ENCODE measurements at regions of chr11 and their contacts with region 1.

Region 1: GRCh38 chr11:128757235-128757711 is 63.4 kb downstream of the FLI1 start:
- DNase-seq: peak; percentile 27 to 74 (median 61)
- ATAC-seq: peak; percentile 96
- H3K4me3 ChIP-seq: no peak overlapping the region
- H3K4me3 Mint-ChIP-seq: peak overlapping the region in 8 of 10 donors; percentile 9 to 62 (median 40)
- H3K27ac ChIP-seq: no peak overlapping the region
- H3K27ac Mint-ChIP-seq: peak overlapping the region; percentile 43 to 92 (median 84)
- H3K4me1 ChIP-seq: peaks cover 36 to 49% of the 10 kb centered on the region in 2 donors
- H3K4me1 Mint-ChIP-seq: peaks cover 70 to 96% (median 89%) of the 10 kb centered on the region in 7 donors
- H3K27me3 ChIP-seq: no peaks in the 10 kb centered on the region
- H3K27me3 Mint-ChIP-seq: no peaks in the 10 kb centered on the region

Region 2: DNA sequence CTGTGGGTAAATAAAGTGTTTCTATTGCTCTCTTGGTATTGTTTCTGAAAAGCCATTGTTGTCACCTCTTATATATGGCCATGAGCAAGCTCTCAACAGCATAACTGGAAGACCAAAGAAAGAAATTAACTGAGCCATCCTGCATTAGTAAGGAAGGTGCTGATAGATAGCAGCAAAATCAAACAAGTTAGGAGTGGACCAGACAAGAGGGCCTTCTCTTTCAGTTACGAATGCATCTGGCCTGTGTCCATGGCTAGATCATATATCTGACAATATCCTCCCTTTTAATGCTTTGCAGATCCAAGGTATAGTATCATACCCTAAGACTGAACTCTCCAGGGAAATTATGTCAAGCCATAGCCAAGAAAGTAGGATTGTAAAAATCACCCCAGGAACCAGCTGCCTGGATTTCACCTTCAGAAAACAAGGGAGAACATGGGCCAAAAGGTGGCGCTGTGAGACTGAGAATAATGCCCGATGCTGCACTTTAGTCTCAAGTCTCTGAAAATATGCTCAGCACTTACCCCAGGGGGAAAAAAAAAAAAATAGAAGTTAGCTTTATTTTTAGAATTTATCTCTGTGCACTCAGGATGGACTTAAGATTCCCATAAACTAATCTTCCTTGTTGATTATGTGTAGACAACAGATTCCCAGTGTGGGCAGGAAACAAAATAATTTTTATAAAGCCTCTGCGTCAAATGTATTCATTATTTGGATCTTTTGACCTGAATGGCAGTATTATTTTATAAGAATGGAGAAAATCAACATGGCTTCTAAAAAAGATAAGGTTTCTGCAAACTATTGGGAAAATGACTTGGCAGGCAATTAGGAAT is 585.0 kb before region 1 on chr11:
- CTCF ChIA-PET with region 1: interaction called, 3 read pairs
- POLR2A ChIA-PET with region 1: no interaction called
- intact Hi-C with region 1: loop called (anchors 1 to 5 kb)
- DNase-seq: peak; percentile 59 to 82 (median 75)
- ATAC-seq: peak; percentile 85
- H3K4me3 ChIP-seq: no peak overlapping the region
- H3K4me3 Mint-ChIP-seq: no peak overlapping the region
- H3K27ac ChIP-seq: no peak overlapping the region
- H3K27ac Mint-ChIP-seq: peak overlapping the region in 2 of 9 donors; percentile 27 to 70
- H3K4me1 ChIP-seq: no peaks in the 10 kb centered on the region
- H3K4me1 Mint-ChIP-seq: peaks cover 0 to 9% (median 4%) of the 10 kb centered on the region in 7 donors
- H3K27me3 ChIP-seq: no peaks in the 10 kb centered on the region
- H3K27me3 Mint-ChIP-seq: peaks cover 0 to 15% (median 0%) of the 10 kb centered on the region in 5 donors

Region 3: GRCh38 chr11:128318856-128319474 is 438.3 kb before region 1 on chr11:
- CTCF ChIA-PET with region 1: no interaction called
- POLR2A ChIA-PET with region 1: no interaction called
- intact Hi-C with region 1: no loop called
- DNase-seq: peak in 7 of 9 donors; percentile 56 to 89 (median 70)
- ATAC-seq: peak; percentile 93
- H3K4me3 ChIP-seq: no peak overlapping the region
- H3K4me3 Mint-ChIP-seq: peak overlapping the region; percentile 26 to 68 (median 51)
- H3K27ac ChIP-seq: peak overlapping the region; percentile 76
- H3K27ac Mint-ChIP-seq: peak overlapping the region; percentile 77 to 96 (median 93)
- H3K4me1 ChIP-seq: peaks cover 48 to 49% of the 10 kb centered on the region in 2 donors
- H3K4me1 Mint-ChIP-seq: peaks cover 50 to 92% (median 86%) of the 10 kb centered on the region in 7 donors
- H3K27me3 ChIP-seq: no peaks in the 10 kb centered on the region
- H3K27me3 Mint-ChIP-seq: no peaks in the 10 kb centered on the region

Region 4: DNA sequence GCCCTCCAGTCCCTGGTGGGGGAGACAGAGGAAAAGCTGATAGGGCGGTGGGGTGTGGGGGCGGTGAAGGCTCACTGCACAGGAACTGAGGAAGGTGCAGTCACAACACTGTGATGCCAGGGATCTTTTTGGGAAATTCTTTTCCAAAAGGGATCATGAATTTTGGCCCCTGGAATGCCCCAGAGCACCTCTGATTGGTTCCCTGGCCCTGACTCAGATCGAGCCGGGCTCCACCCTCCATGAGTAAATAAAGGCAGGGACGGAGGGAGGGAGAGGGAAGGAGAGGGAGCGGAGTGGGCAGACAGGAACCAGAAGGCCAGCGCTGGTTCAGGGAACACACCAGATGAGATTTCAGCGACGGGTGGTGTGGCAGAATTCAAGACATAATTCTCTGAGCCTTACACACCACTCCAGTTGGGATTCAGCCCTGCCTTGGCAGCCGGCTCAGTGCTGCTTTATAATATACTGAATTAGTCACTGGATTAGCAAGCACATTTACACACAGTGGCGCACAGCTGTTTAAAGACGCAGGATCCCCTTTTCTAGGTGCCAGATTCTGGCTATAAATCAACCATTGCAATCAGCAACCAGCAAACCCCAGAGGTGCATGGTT is 250.2 kb before region 1 on chr11:
- CTCF ChIA-PET with region 1: no interaction called
- POLR2A ChIA-PET with region 1: interaction called, 3 read pairs
- intact Hi-C with region 1: loop called in 1 of 2 experiments (anchors 5 kb)
- DNase-seq: peak in 1 of 9 donors; percentile 60
- ATAC-seq: no peak
- H3K4me3 ChIP-seq: peak overlapping the region; percentile 96
- H3K4me3 Mint-ChIP-seq: peak overlapping the region; percentile 85 to 100 (median 98)
- H3K27ac ChIP-seq: peak overlapping the region; percentile 97
- H3K27ac Mint-ChIP-seq: peak overlapping the region; percentile 87 to 99 (median 97)
- H3K4me1 ChIP-seq: peaks cover 89 to 91% of the 10 kb centered on the region in 2 donors
- H3K4me1 Mint-ChIP-seq: peaks cover 70 to 98% (median 92%) of the 10 kb centered on the region in 7 donors
- H3K27me3 ChIP-seq: no peaks in the 10 kb centered on the region
- H3K27me3 Mint-ChIP-seq: no peaks in the 10 kb centered on the region

Region 5: DNA sequence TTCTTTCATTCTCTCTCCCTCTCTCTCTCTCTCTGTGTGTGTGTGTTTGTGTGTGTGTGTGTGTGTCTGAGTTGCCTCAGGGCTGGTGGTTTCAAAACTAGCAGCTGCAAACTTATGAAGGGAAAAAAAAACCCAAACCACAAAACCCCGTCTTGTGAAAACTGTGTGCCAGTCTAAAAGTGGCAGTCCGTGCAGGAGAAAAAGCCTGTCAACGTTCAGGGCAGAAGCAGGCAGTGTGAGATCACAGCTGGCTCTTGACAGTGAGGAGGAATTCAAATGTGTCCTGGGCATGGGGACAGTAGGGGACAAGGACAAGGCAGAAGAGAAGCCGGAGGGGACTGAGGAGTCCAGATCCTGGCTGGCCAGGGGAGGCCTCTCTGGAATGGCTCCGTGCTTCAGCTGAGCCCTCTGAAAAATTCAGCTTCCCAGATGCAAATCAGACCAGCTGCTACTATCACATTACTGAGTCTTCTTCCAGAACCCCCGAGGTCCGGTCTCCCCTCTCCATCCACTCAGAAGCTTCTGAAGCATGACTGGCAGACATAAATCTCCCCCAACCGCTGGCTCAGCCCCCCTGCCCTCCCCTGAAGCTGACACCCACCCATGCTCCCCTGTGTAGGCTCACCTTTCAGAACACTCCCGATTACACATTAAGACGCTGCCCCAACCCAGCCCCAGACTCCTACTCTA is 31.5 kb before region 1 on chr11:
- CTCF ChIA-PET with region 1: interaction called, 12 read pairs
- POLR2A ChIA-PET with region 1: interaction called, 7 read pairs
- intact Hi-C with region 1: loop called (anchors 1 to 2 kb)
- DNase-seq: peak; percentile 32 to 90 (median 86)
- ATAC-seq: peak; percentile 76
- H3K4me3 ChIP-seq: peak overlapping the region; percentile 62
- H3K4me3 Mint-ChIP-seq: peak overlapping the region; percentile 70 to 96 (median 86)
- H3K27ac ChIP-seq: peak overlapping the region; percentile 65
- H3K27ac Mint-ChIP-seq: peak overlapping the region; percentile 71 to 98 (median 92)
- H3K4me1 ChIP-seq: peaks cover 96 to 99% of the 10 kb centered on the region in 2 donors
- H3K4me1 Mint-ChIP-seq: peaks cover 90 to 100% (median 97%) of the 10 kb centered on the region in 7 donors
- H3K27me3 ChIP-seq: no peaks in the 10 kb centered on the region
- H3K27me3 Mint-ChIP-seq: no peaks in the 10 kb centered on the region

Region 6: DNA sequence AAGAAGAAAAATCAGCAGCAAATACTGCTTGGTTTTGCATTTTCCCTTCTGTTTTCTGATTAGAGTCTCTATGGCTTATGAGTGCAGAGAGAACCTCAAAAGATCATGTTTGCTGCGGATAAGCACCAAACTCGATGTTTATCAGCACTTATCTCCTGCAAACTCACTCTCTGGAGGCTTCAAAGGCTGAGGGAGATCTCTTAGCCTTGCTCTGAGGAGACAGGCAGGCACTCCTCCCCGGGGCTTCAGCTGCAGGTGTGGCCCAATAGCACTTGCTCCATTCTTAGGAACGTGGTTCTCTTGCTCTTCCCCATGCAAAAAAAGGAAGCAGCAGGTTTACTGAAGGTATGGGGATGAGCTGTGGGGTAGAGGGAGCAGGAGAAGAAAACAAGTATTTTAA is 18.3 kb before region 1 on chr11:
- CTCF ChIA-PET with region 1: interaction called, 5 read pairs
- POLR2A ChIA-PET with region 1: interaction called, 6 read pairs
- intact Hi-C with region 1: loop called (anchors 1 to 2 kb)
- DNase-seq: peak in 6 of 9 donors; percentile 41 to 58 (median 50)
- ATAC-seq: peak; percentile 70
- H3K4me3 ChIP-seq: peak overlapping the region; percentile 2
- H3K4me3 Mint-ChIP-seq: peak overlapping the region; percentile 68 to 93 (median 82)
- H3K27ac ChIP-seq: peak overlapping the region; percentile 52
- H3K27ac Mint-ChIP-seq: peak overlapping the region; percentile 64 to 98 (median 95)
- H3K4me1 ChIP-seq: peaks cover 66 to 79% of the 10 kb centered on the region in 2 donors
- H3K4me1 Mint-ChIP-seq: peaks cover 71 to 95% (median 93%) of the 10 kb centered on the region in 7 donors
- H3K27me3 ChIP-seq: no peaks in the 10 kb centered on the region
- H3K27me3 Mint-ChIP-seq: no peaks in the 10 kb centered on the region

Region 7: GRCh38 chr11:128824191-128825049 is 67.1 kb after region 1 on chr11:
- CTCF ChIA-PET with region 1: no interaction called
- POLR2A ChIA-PET with region 1: no interaction called
- intact Hi-C with region 1: no loop called
- DNase-seq: no peak
- ATAC-seq: no peak
- H3K4me3 ChIP-seq: no peak overlapping the region
- H3K4me3 Mint-ChIP-seq: peak overlapping the region in 4 of 10 donors; percentile 9 to 58 (median 24)
- H3K27ac ChIP-seq: no peak overlapping the region
- H3K27ac Mint-ChIP-seq: peak overlapping the region in 1 of 9 donors; percentile 4
- H3K4me1 ChIP-seq: no peaks in the 10 kb centered on the region
- H3K4me1 Mint-ChIP-seq: peaks cover 2 to 14% (median 11%) of the 10 kb centered on the region in 7 donors
- H3K27me3 ChIP-seq: no peaks in the 10 kb centered on the region
- H3K27me3 Mint-ChIP-seq: no peaks in the 10 kb centered on the region